Right ventricle myocardium inferior (tissue), 1 donor: ENCODE measurements at regions of chr4 and their contacts with region 1.

Region 1: DNA sequence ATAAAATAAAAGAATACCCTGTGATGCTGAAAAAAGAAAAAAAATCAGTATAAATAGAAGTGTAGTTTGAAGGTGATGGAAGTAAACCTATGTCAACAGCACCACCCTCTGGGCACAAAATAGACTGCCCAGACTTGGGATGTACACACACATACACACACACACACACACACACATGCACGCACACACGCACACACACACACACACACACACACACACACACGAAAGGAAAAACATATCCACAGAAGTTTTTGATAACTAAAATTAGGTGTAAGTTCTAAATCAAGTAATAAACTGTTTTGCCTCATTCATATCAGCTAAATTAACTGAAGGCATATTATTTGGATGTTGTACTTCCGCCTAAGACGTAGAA is 40.5 kb downstream of the ANXA5 start:
- DNase-seq: no peak
- ATAC-seq: peak; percentile 79

Region 2: DNA sequence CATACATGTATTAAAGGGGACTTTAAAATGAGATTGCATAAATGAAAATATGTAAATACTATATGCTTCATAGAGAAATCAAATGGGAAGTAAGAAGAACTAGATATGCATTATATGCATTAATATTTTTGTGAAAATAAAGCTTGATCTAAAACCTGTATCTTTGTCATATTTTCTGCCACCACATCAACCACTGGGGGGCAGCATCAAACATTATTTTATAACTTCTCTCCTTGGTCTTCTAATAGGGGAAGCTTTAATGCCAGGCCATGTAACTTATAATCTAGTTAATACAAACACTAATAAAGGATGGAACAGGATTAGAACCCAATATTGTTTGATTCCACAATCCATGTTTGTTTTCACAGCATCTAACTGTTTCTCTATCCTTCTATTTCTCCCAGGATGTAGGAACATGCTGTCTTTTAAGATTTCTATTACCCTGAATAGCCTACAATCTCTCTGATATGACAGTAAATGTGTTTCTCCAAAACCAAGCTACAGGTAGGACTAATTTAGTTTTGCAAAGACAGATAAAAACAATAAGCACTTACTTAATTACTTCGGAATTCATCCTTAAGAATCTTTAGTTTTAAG is 285.4 kb before region 1 on chr4:
- intact Hi-C with region 1: loop called (anchors 2 kb)
- DNase-seq: no peak
- ATAC-seq: no peak

Region 3: GRCh38 chr4:121462660-121463261 is 193.5 kb before region 1 on chr4:
- intact Hi-C with region 1: loop called (anchors 5 kb)
- DNase-seq: no peak
- ATAC-seq: no peak

Region 4: DNA sequence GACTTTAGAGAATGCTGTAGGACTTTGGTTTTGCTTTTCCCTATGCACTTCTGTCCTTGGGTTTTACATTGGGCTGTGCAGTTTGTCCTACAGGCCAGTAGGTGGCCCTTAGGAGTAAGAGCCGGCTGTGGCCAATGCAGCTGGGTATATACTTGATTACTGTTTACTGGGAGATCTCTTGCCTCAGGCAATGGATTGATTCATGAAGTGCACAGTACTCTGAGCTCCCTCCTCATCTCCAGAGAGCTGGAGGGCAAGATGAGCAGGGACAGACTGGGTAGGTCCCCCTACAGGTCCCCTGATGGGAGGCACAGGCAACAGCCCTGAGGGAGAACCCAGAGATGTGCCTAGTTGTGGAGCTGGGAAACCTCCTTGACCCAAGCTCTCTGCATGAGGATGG is 171.6 kb before region 1 on chr4:
- intact Hi-C with region 1: loop called (anchors 2 kb)
- DNase-seq: no peak
- ATAC-seq: peak; percentile 73

Region 5: DNA sequence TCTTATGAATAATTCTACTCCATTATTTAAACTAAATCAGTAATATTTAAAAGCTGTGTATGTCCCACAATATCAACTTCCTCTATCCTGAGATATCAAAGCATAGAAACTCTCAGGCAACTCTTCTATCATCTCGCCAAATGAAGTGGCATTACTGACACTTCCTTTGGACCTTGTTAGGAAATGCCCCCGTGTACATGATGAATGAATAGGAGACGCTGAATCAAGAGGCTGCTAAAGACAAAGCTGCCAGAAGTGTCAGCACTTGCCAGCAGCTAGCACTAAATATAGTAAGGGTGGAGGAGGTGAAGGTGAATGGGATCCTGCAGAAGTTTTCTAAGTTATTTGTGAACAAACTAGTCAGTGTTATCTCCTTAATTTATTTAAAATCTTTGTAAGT is 396.4 kb after region 1 on chr4:
- intact Hi-C with region 1: no loop called
- DNase-seq: no peak
- ATAC-seq: peak; percentile 96